Adrenal gland (tissue), 19 donors: ENCODE measurements at regions of chr1 and their contacts with region 1.

Region 1: DNA sequence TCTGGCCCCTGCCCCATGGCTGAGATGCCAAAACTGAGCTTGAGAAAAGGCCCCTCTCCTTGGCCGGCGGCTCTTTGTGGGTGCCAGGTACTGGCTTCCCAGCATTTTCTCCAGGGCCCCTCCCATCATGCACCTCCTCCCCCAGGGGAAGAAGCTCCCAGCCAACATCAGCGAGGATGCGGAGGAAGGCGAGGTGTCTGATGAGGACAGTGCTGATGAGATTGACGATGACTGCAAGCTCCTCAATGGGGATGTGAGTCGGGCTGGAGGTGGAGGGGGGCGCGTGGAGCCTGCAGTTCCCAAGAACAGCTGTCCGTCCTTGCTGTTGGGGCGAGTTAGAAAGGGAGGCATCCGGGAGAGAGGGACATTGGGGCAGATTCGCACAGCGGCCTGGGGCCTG is 13.5 kb downstream of the PLCH2 start:
- DNase-seq: no peak
- H3K4me3 ChIP-seq: no peak overlapping the region
- H3K27ac ChIP-seq: no peak overlapping the region
- H3K4me1 ChIP-seq: peaks cover 0 to 7% of the 10 kb centered on the region in 2 donors
- H3K27me3 ChIP-seq: no peaks in the 10 kb centered on the region
- CTCF ChIP-seq: no peak
- POLR2A ChIP-seq: no peak

Region 2: GRCh38 chr1:2438038-2438437 is 51.6 kb before region 1 on chr1:
- intact Hi-C with region 1: loop called in 1 of 2 experiments (anchors 5 kb)
- DNase-seq: no peak
- H3K4me3 ChIP-seq: no peak overlapping the region
- H3K27ac ChIP-seq: no peak overlapping the region
- H3K4me1 ChIP-seq: no peaks in the 10 kb centered on the region
- H3K27me3 ChIP-seq: peaks cover 20% of the 10 kb centered on the region
- CTCF ChIP-seq: no peak
- POLR2A ChIP-seq: no peak